ENCODE measurements at regions of chr1 and their contacts with region 1.

Region 1: DNA sequence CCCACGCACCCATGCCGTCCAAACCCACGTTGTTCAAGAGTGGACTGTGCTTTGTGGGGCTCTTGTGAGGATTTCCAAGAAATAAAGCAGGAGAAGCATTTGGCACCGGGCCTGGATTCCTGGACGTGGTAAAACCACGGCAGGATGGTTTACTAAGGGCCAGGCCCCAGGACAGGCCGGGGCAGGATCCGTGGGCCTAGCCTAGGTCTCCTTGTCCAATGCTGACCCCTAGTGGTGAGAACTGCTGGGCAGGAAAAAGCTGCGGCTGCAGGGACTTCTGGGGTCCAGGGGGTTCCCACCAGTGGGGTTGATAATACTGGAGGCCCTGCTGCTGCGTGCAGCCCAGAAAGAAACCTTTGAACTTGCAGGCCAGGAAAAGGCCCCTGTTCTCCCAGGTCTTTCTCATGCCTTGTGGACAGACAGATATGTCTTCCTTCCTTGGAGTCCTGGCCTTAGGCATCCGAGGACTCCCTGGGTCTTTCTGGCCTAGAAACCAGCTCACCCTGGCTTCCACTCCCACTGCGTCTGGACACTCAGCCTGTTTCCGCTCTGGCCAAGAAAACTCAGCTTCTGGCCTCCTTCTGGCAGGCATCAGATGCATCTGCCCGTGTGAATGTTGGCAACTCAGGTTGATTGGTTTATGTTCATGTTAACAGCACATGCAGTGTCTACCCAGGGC is 106.9 kb upstream of the TMEM51 start:
- DNase-seq: peak; percentile 74
- H3K4me3 Mint-ChIP-seq: no peak overlapping the region
- H3K27ac Mint-ChIP-seq: no peak overlapping the region
- H3K4me1 Mint-ChIP-seq: no peaks in the 10 kb centered on the region
- H3K27me3 Mint-ChIP-seq: no peaks in the 10 kb centered on the region
- CTCF ChIP-seq: peak; percentile 87

Region 2: GRCh38 chr1:14850566-14850965 is 196.1 kb before region 1 on chr1:
- CTCF ChIA-PET with region 1: no interaction called
- intact Hi-C with region 1: loop called (anchors 10 kb)
- DNase-seq: peak; percentile 35
- H3K4me3 Mint-ChIP-seq: no peak overlapping the region
- H3K27ac Mint-ChIP-seq: no peak overlapping the region
- H3K4me1 Mint-ChIP-seq: no peaks in the 10 kb centered on the region
- H3K27me3 Mint-ChIP-seq: peaks cover 38% of the 10 kb centered on the region
- CTCF ChIP-seq: peak; percentile 16

Region 3: DNA sequence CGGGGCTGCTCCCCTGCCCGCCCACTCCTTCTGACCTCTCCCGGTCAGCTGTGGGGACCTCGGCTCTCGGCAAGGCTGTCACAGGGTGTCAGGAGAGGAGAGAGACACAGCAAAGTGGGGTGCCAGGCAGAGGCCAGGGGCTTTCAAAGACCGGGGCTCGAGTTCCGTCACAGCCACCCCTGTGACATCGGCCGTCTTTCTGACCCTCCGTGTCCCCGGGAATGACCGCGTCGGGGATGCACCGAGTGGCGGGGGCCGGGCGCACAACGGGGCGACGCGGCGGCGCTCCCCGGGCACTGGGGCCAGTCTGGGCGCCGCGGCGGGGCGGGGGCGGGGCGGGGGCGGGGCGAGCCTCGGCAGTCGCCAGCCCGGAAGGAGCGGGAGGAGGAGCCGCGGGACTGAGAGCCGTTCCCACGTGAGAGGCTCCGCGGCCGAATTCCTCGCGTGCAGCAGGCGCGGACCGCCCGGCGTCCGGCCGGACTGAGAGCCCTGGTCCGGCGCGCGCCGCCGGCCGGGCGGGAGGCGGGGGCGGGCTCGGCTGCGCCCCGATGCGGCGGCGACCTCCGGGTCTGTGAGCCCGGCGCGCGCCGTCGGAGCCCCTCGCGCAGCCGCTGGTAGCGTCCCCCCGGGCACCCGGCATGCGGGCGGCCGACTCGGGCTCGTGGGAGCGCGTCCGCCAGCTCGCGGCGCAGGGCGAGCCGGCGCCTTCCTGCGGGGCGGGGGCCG is 122.7 kb before region 1 on chr1:
- CTCF ChIA-PET with region 1: no interaction called
- intact Hi-C with region 1: no loop called
- DNase-seq: peak; percentile 30
- H3K4me3 Mint-ChIP-seq: peak overlapping the region; percentile 71
- H3K27ac Mint-ChIP-seq: no peak overlapping the region
- H3K4me1 Mint-ChIP-seq: no peaks in the 10 kb centered on the region
- H3K27me3 Mint-ChIP-seq: peaks cover 25% of the 10 kb centered on the region
- CTCF ChIP-seq: no peak

Region 4: DNA sequence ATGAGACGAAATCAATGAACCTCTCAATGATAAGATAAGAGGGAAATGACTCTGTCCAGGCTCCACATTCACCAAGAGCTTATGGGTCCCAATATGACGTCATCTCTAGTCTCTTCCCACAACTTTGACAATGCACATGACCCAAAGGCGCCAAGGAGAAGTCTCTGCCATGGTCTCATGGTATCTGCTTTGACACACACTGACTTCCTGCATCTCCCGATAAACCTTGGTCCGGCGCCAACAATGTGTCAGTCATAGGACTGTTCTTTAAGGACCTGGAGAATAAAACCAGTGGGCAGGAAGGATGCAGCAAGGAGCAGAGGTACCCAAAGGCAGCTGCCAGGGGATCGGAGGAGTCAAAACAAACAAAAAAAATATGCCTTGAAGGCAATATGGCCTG is 60.0 kb after region 1 on chr1:
- CTCF ChIA-PET with region 1: no interaction called
- intact Hi-C with region 1: no loop called
- DNase-seq: peak; percentile 24
- H3K4me3 Mint-ChIP-seq: no peak overlapping the region
- H3K27ac Mint-ChIP-seq: no peak overlapping the region
- H3K4me1 Mint-ChIP-seq: peaks cover 7% of the 10 kb centered on the region
- H3K27me3 Mint-ChIP-seq: peaks cover 8% of the 10 kb centered on the region
- CTCF ChIP-seq: no peak

Region 5: GRCh38 chr1:15736038-15736889 is 689.6 kb after region 1 on chr1 and contains the start of gene SLC25A34:
- CTCF ChIA-PET with region 1: no interaction called
- intact Hi-C with region 1: no loop called
- DNase-seq: no peak
- H3K4me3 Mint-ChIP-seq: no peak within 1 kb of the TSS
- H3K27ac Mint-ChIP-seq: no peak within 1 kb of the TSS
- H3K4me1 Mint-ChIP-seq: peaks cover 4% of the 10 kb centered on the region
- H3K27me3 Mint-ChIP-seq: no peaks in the 10 kb centered on the region
- CTCF ChIP-seq: no peak
- total RNA-seq, gene SLC25A34: 0.68 and 1.2 TPM in 2 replicates

Region 6: GRCh38 chr1:16009030-16009709 is 962.5 kb after region 1 on chr1:
- CTCF ChIA-PET with region 1: no interaction called
- intact Hi-C with region 1: no loop called
- DNase-seq: peak; percentile 79
- H3K4me3 Mint-ChIP-seq: no peak overlapping the region
- H3K27ac Mint-ChIP-seq: no peak overlapping the region
- H3K4me1 Mint-ChIP-seq: peaks cover 8% of the 10 kb centered on the region
- H3K27me3 Mint-ChIP-seq: no peaks in the 10 kb centered on the region
- CTCF ChIP-seq: peak; percentile 82